Activated CD4-positive, alpha-beta memory T cell treated with anti-CD3 and anti-CD28 coated beads for 36 hours (primary cell): ENCODE measurements at regions of chr9 and their contacts with region 1.

Region 1: DNA sequence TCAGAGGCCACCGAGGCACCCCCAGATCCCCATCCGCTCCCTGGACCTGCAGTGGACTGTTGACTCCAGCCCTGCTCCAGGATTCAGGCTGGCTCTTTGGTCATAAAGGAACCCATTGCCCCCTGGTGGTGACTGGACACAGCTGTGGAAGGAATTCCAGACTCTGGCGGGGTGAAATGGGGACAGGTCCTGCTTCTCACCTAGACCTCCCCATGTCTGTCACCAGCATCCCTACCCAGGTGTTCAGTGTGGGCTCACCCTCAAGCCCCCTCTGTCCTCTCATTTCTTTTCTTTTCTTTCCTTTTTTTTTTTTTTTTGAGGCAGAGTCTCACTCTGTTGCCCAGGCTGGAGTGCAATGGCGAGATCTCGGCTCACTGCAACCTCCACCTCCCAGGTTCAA is 25.5 kb upstream of the STXBP1 start:
- DNase-seq: peak; percentile 71
- H3K4me3 Mint-ChIP-seq: no peak overlapping the region
- H3K27ac Mint-ChIP-seq: no peak overlapping the region
- H3K4me1 Mint-ChIP-seq: peaks cover 9% of the 10 kb centered on the region
- H3K27me3 Mint-ChIP-seq: peaks cover 6% of the 10 kb centered on the region

Region 2: GRCh38 chr9:127503947-127504782 is 82.4 kb before region 1 on chr9:
- CTCF ChIA-PET with region 1: interaction called, 29 read pairs
- POLR2A ChIA-PET with region 1: no interaction called
- intact Hi-C with region 1: loop called (anchors 1 kb)
- DNase-seq: peak; percentile 86
- H3K4me3 Mint-ChIP-seq: no peak overlapping the region
- H3K27ac Mint-ChIP-seq: no peak overlapping the region
- H3K4me1 Mint-ChIP-seq: no peaks in the 10 kb centered on the region
- H3K27me3 Mint-ChIP-seq: no peaks in the 10 kb centered on the region

Region 3: DNA sequence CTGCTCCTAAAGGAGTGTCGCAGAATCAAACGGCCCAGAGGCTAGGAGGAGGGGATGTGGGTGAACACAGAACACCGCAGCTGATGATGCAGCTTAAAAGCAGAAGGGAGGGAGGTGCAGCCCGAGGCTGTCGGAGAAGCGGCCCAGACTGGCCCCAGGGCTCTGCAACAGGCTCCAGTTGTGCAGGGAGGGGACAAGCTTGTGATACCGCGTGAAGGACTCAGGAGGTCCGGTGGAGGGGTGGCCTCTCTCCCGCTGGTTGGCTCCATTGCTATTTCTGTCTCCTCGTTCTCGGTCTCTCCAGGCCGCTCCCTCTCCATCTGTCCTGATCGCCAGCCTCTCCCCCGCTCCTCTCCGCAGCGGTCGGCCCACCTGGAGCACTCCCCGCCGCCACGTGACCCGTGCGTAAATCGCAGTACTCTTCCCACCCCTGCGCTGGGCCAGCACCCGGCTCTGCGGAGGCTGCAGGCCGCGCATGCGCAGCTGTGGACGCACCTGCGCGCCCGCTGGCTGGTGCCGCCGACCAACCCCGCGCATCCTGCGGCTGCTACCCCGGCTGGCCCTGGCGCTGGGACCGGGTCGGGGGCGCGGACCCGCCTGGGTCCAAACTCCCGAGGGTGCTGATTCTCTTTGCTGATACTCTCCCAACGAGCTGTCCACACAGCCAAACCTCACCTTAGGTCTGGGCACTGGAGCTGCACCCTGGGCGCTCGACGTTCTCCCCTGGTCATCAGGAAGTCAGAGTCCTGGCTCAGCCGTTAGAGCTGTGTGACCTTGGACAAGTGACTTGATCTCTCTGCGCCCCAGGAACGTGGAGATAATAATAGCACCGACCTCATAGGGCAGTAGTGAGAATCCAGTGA is 21.8 kb after region 1 on chr9:
- CTCF ChIA-PET with region 1: interaction called, 10 read pairs
- POLR2A ChIA-PET with region 1: interaction called, 4 read pairs
- intact Hi-C with region 1: no loop called
- DNase-seq: peak; percentile 82
- H3K4me3 Mint-ChIP-seq: peak overlapping the region; percentile 73
- H3K27ac Mint-ChIP-seq: peak overlapping the region; percentile 9
- H3K4me1 Mint-ChIP-seq: peaks cover 20% of the 10 kb centered on the region
- H3K27me3 Mint-ChIP-seq: peaks cover 13% of the 10 kb centered on the region